Ascending aorta (tissue), 2 donors: ENCODE measurements at regions of chr19 and their contacts with region 1.

Region 1: GRCh38 chr19:16175954-16176353 is 2.6 kb upstream of the CIB3 start:
- DNase-seq: no peak
- H3K4me3 ChIP-seq: no peak overlapping the region
- H3K27ac ChIP-seq: no peak overlapping the region
- H3K4me1 ChIP-seq: no peaks in the 10 kb centered on the region
- H3K27me3 ChIP-seq: no peaks in the 10 kb centered on the region
- CTCF ChIP-seq: no peak

Region 2: DNA sequence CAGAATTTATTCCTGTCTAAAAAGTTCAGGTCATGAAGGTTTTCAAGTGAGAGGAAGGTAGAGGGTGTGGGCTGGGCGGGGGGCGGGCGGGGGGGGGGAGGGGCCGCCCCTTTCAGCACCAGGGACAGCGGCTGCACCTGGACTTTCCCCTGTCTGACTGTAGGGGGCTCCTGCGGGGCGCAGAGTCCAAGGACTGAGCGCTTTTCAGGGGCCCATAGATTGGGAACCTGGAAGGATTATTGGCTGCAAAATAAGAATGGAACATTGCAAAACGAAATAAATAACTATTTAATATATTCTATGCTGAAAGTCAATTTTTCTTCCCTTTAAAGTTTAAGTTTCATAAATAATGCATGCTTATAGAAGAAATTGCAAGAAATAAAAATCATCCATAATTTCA is 544.1 kb before region 1 on chr19:
- intact Hi-C with region 1: loop called (anchors 2 kb)
- DNase-seq: no peak
- H3K4me3 ChIP-seq: no peak overlapping the region
- H3K27ac ChIP-seq: no peak overlapping the region
- H3K4me1 ChIP-seq: no peaks in the 10 kb centered on the region
- H3K27me3 ChIP-seq: no peaks in the 10 kb centered on the region
- CTCF ChIP-seq: peak in 1 of 3 experiments; percentile 25